ENCODE measurements at regions of chr6 and their contacts with region 1.

Region 1: GRCh38 chr6:157323255-157323965 is at the start of gene TMEM242:
- DNase-seq: peak; percentile 78 to 95 (median 87)
- ATAC-seq: peak; percentile 95
- H3K4me3 ChIP-seq: peak within 1 kb of the TSS; percentile 93 to 98
- H3K4me3 Mint-ChIP-seq: peak within 1 kb of the TSS; percentile 88
- H3K27ac ChIP-seq: peak within 1 kb of the TSS; percentile 66 to 75
- H3K27ac Mint-ChIP-seq: peak within 1 kb of the TSS; percentile 86
- H3K4me1 ChIP-seq: peaks cover 8% of the 10 kb centered on the region
- H3K4me1 Mint-ChIP-seq: peaks cover 22% of the 10 kb centered on the region
- H3K27me3 ChIP-seq: no peaks in the 10 kb centered on the region
- H3K27me3 Mint-ChIP-seq: peaks cover 5% of the 10 kb centered on the region
- CTCF ChIP-seq: peak; percentile 24
- total RNA-seq, gene TMEM242: 13.8 to 14.0 TPM

Region 2: GRCh38 chr6:157379656-157380454 is 56.4 kb after region 1 on chr6:
- CTCF ChIA-PET with region 1: interaction called, 6 read pairs
- POLR2A ChIA-PET with region 1: interaction called, 9 read pairs
- intact Hi-C with region 1: loop called (anchors 1 kb)
- DNase-seq: peak; percentile 76 to 92 (median 89)
- ATAC-seq: peak; percentile 79
- H3K4me3 ChIP-seq: peak overlapping the region; percentile 92 to 96
- H3K4me3 Mint-ChIP-seq: peak overlapping the region; percentile 83
- H3K27ac ChIP-seq: peak overlapping the region; percentile 68 to 80
- H3K27ac Mint-ChIP-seq: peak overlapping the region; percentile 64
- H3K4me1 ChIP-seq: peaks cover 10% of the 10 kb centered on the region
- H3K4me1 Mint-ChIP-seq: peaks cover 20% of the 10 kb centered on the region
- H3K27me3 ChIP-seq: no peaks in the 10 kb centered on the region
- H3K27me3 Mint-ChIP-seq: no peaks in the 10 kb centered on the region
- CTCF ChIP-seq: no peak

Region 3: DNA sequence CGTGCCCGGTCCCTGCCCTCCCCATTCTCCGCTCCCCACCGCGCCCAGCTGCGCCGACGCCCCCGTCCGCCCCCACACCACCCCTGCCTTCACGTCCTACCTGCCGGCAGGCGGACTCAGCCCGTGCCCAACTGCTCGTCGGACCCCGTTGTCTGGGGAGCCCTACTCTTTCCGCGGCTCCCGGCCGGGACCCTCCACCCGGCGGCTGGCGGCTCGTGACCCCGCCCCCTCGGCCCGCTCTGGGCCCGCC is 844.6 kb after region 1 on chr6 and contains the start of gene SERAC1:
- CTCF ChIA-PET with region 1: no interaction called
- POLR2A ChIA-PET with region 1: no interaction called
- intact Hi-C with region 1: loop called in 1 of 2 experiments (anchors 5 kb)
- DNase-seq: no peak
- ATAC-seq: no peak
- H3K4me3 ChIP-seq: peak within 1 kb of the TSS; percentile 68 to 98
- H3K4me3 Mint-ChIP-seq: peak within 1 kb of the TSS; percentile 95
- H3K27ac ChIP-seq: peak within 1 kb of the TSS; percentile 90 to 98
- H3K27ac Mint-ChIP-seq: peak within 1 kb of the TSS; percentile 99
- H3K4me1 ChIP-seq: peaks cover 7% of the 10 kb centered on the region
- H3K4me1 Mint-ChIP-seq: peaks cover 35% of the 10 kb centered on the region
- H3K27me3 ChIP-seq: no peaks in the 10 kb centered on the region
- H3K27me3 Mint-ChIP-seq: no peaks in the 10 kb centered on the region
- CTCF ChIP-seq: no peak
- total RNA-seq, gene SERAC1: 1.1 to 2.4 TPM